GM12878 (cell line): ENCODE measurements at regions of chr5 and their contacts with region 1.

Region 1: GRCh38 chr5:136132557-136133221 is at the start of gene SMAD5:
- DNase-seq: peak; percentile 65
- ATAC-seq: peak; percentile 95
- H3K4me3 ChIP-seq: peak within 1 kb of the TSS; percentile 76
- H3K27ac ChIP-seq: peak within 1 kb of the TSS; percentile 54; the same call in 1 of the 2 replicates
- H3K4me1 ChIP-seq: peaks cover 3% of the 10 kb centered on the region
- H3K27me3 ChIP-seq: peaks cover 0 to 3% of the 10 kb centered on the region in 2 experiments; a peak in 1 of 4 replicates
- CTCF ChIP-seq: no peak
- EP300 ChIP-seq: no peak
- POLR2A ChIP-seq: peak; percentile 88
- RAD21 ChIP-seq: no peak
- polyA plus RNA-seq, gene SMAD5: 3.6 to 7.1 TPM

Region 2: GRCh38 chr5:136020383-136021015 is 112.2 kb before region 1 on chr5:
- CTCF ChIA-PET with region 1: no interaction called
- POLR2A ChIA-PET with region 1: no interaction called
- RAD21 ChIA-PET with region 1: no interaction called
- SMC1A ChIA-PET with region 1: no interaction called
- in situ Hi-C with region 1: no loop called
- intact Hi-C with region 1: no loop called
- DNase-seq: no peak
- ATAC-seq: peak; percentile 35; the same call in 2 of the 3 replicates
- H3K4me3 ChIP-seq: no peak overlapping the region
- H3K27ac ChIP-seq: no peak overlapping the region
- H3K4me1 ChIP-seq: no peaks in the 10 kb centered on the region
- H3K27me3 ChIP-seq: peaks cover 0 to 5% of the 10 kb centered on the region in 2 experiments; a peak in 2 of 4 replicates
- CTCF ChIP-seq: no peak
- EP300 ChIP-seq: no peak
- POLR2A ChIP-seq: no peak
- RAD21 ChIP-seq: no peak

Region 3: DNA sequence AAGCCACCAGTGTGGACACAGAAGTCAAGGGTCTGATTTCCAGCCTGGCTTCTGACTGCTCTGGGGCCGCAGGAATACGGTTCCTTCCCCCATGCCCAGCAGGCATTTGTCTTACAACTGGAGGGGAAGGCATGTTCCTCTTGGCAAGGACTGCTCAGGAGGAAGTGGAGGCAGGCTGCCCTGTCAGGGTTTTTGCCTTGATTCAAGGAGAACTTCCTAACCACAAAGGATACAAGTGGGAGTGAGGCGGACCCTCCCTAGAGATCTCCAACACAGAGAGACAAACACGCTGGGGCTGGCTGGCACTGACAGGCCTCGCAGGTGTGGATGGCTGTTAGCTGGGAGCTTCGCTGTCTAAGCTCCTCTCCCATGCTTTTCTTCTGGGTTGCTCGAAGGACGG is 84.8 kb before region 1 on chr5:
- CTCF ChIA-PET with region 1: no interaction called
- POLR2A ChIA-PET with region 1: no interaction called
- RAD21 ChIA-PET with region 1: no interaction called
- SMC1A ChIA-PET with region 1: no interaction called
- in situ Hi-C with region 1: no loop called
- intact Hi-C with region 1: no loop called
- DNase-seq: no peak
- ATAC-seq: no peak
- H3K4me3 ChIP-seq: no peak overlapping the region
- H3K27ac ChIP-seq: no peak overlapping the region
- H3K4me1 ChIP-seq: no peaks in the 10 kb centered on the region
- H3K27me3 ChIP-seq: no peaks in the 10 kb centered on the region; a peak in 1 of 4 replicates
- CTCF ChIP-seq: no peak
- EP300 ChIP-seq: no peak
- POLR2A ChIP-seq: no peak
- RAD21 ChIP-seq: no peak

Region 4: DNA sequence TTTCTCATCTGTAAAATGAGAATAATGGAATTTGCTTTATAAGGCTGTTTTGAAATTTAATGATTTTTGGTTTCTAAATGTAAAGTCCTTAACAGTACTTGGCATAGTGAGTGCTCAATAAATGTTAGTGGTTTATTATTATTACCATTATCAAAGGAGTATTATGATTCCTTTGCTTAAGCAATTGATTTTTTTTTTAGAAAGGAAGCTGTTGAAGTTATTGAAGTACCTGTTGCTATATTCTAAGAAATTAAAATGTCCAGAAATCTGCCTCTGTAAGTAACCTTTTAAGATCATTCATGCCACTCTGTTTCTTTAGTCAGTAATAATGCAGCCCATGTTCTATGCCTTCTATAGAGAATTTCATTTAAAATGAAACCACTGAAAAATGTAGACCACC is 14.9 kb after region 1 on chr5:
- CTCF ChIA-PET with region 1: interaction called, 26 read pairs
- POLR2A ChIA-PET with region 1: interaction called, 10 read pairs
- RAD21 ChIA-PET with region 1: interaction called, 13 read pairs
- SMC1A ChIA-PET with region 1: interaction called, 25 read pairs
- in situ Hi-C with region 1: no loop called
- intact Hi-C with region 1: no loop called
- DNase-seq: no peak
- ATAC-seq: no peak
- H3K4me3 ChIP-seq: no peak overlapping the region
- H3K27ac ChIP-seq: no peak overlapping the region
- H3K4me1 ChIP-seq: no peaks in the 10 kb centered on the region
- H3K27me3 ChIP-seq: no peaks in the 10 kb centered on the region
- CTCF ChIP-seq: no peak
- EP300 ChIP-seq: no peak
- POLR2A ChIP-seq: no peak
- RAD21 ChIP-seq: no peak